ENCODE measurements at regions of chr9 and their contacts with region 1.

Region 1: DNA sequence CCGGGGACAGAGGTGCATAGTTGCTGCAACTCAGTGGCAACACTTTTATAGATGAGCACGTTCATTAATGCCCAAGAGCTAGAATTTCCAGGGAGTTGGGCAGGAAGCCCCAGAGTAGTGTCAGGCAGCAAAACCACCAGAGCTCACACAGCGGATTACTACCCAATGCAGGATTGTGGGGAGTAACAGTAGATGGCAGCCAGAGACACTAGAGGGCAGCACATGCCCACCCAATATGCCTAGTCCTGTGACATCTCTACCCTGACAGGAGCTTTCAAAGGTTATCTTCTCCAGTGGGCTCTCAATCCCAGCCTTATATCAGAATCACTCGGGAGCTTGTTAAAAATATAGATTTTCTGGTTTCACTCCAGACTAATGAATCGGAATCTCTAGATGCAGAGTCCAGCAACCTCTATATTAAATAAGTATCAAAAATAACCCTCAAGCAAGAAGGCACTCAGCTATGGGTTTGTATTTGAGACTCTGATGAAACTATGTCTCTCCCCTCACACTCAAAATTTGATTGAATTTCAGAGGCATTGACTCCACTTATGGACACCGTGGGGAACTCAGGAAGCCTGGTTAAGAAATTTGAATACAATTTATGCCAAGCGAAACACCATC is 58.4 kb upstream of the PHF24 start:
- DNase-seq: peak; percentile 81
- H3K4me3 ChIP-seq: no peak overlapping the region
- H3K27ac ChIP-seq: no peak overlapping the region
- H3K4me1 ChIP-seq: no peaks in the 10 kb centered on the region
- H3K27me3 ChIP-seq: peaks cover 35% of the 10 kb centered on the region

Region 2: DNA sequence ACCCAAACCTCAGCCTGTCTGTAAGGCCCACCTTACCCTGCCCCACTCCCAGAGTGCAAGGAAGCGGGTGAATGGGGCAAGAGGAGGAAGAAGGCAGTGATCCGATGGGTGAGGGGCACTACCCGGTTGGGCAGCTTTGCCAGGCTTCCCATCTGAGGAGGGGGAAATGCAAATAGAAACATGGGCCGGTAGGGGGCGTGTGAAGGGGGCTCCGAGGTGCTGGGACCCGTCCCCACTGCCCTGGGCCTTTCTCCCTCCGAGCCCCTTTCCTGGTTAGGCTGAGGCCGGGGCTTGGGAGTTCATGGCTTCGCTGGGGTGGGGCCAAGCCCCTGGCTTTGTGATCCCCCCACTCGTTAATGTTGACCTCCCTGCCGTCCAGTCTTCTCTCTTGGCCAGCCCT is 499.4 kb before region 1 on chr9:
- in situ Hi-C with region 1: no loop called
- DNase-seq: no peak
- H3K4me3 ChIP-seq: no peak overlapping the region
- H3K27ac ChIP-seq: no peak overlapping the region
- H3K4me1 ChIP-seq: no peaks in the 10 kb centered on the region
- H3K27me3 ChIP-seq: no peaks in the 10 kb centered on the region

Region 3: GRCh38 chr9:35096035-35096849 is 196.6 kb after region 1 on chr9 and contains the start of gene PIGO:
- in situ Hi-C with region 1: loop called (anchors 10 kb)
- DNase-seq: peak; percentile 91
- H3K4me3 ChIP-seq: peak within 1 kb of the TSS; percentile 99
- H3K27ac ChIP-seq: peak within 1 kb of the TSS; percentile 89
- H3K4me1 ChIP-seq: no peaks in the 10 kb centered on the region
- H3K27me3 ChIP-seq: no peaks in the 10 kb centered on the region
- total RNA-seq, gene PIGO: 16.4 and 17.4 TPM in 2 replicates

Measured in GM23248 (cell line).